HEK293 (cell line): ENCODE measurements at regions of chr21 and their contacts with region 1.

Region 1: DNA sequence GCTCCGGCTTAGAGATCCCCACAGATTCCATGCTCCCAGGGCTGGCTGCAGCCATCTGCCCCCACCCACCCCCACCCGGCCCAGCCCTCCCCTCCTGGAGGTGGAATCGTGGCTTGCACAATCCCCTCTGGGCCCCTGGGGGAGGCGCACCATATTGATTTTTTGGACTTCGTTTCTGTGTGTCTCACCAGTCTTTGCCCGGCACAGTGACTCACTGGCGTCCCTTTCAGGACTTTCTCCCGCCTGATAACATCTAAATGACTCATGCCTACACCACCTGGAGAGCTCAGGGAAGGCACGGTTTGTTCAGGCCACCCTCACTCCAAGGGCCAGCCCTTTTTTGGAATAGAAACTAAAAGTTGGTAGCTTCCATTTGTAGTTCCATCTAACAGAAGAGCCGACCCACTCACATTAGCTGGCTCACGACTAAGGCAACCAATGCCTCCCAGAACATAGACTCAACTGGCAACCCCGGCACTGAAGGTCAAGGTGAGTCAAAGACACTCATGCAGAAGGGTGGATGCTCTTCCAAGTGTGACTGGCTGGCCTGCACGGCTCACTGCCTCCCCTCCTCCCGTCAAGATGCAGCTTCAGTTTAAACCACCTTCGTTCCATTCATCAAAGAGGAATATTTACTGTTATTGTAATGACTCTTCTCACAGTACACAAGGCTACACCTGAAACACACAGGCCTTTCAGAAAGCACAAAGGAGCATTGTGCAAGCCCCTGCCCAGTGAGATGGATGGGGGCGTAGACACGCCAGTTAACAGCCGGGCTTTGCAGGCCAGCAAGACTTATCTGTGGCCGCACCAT is 18.1 kb upstream of the ETS2 start:
- H3K4me3 ChIP-seq: no peak overlapping the region
- H3K27ac ChIP-seq: peak overlapping the region; percentile 48; the same call in 1 of the 2 replicates
- H3K4me1 ChIP-seq: peaks cover 11% of the 10 kb centered on the region
- CTCF ChIP-seq: no peak

Region 2: DNA sequence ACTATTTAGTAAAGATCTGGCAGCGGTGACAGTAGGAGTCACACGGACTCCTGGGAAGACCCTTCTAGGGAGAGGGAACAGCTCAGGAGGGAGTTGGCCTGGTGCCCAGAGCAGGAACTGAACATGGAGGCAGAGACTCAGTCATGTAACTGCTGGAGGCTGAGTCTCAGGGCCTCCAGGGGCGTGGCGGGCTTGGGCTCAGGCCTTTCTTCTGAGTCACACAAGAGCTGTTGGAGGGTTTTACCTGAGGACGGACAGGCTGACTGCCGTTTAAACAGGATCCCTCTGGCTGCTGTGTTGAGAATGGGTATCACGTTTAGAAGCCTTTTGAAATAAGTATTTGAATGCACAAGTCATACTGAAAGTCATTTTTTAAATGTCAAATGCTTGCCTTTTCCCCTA is 10.8 kb after region 1 on chr21:
- CTCF ChIA-PET with region 1: interaction called, 3 read pairs
- POLR2A ChIA-PET with region 1: interaction called, 10 read pairs
- H3K4me3 ChIP-seq: no peak overlapping the region
- H3K27ac ChIP-seq: no peak overlapping the region
- H3K4me1 ChIP-seq: peaks cover 6% of the 10 kb centered on the region
- CTCF ChIP-seq: no peak